Cardiac septum (tissue), 1 donor: ENCODE measurements at regions of chr9 and their contacts with region 1.

Region 1: GRCh38 chr9:2727966-2728613 is 10.8 kb downstream of the KCNV2 start:
- DNase-seq: no peak

Region 2: DNA sequence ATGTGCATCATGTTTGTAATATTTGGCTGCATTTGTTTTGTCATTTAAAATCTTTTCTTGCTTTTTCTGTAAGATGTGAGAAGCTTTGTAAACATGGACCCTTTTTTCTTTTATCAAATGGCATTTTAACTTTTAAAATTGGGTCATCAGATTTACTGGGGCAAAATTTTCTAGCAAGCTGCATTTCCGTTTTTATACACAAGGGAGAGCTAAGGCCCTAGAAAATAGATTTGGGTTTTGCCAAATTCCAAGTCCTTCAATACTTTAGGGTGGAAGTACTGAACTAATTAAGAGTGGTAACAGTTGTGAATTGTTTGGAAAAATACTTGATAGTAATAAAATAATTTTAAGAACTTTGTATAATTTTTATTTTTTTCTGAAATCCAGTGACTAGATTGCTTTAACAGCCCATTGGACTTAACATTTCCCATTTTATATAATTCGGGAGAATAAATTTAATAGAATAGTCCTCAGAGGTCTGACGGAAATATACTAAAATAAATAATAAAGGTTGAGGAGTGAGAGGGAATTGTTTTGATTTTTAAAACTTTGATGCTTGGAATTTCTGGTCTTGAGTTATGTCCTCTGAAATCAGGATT is 595.5 kb before region 1 on chr9:
- intact Hi-C with region 1: loop called (anchors 10 kb)
- DNase-seq: no peak

Region 3: GRCh38 chr9:2321523-2322151 is 406.5 kb before region 1 on chr9:
- intact Hi-C with region 1: loop called (anchors 10 kb)
- DNase-seq: no peak

Region 4: DNA sequence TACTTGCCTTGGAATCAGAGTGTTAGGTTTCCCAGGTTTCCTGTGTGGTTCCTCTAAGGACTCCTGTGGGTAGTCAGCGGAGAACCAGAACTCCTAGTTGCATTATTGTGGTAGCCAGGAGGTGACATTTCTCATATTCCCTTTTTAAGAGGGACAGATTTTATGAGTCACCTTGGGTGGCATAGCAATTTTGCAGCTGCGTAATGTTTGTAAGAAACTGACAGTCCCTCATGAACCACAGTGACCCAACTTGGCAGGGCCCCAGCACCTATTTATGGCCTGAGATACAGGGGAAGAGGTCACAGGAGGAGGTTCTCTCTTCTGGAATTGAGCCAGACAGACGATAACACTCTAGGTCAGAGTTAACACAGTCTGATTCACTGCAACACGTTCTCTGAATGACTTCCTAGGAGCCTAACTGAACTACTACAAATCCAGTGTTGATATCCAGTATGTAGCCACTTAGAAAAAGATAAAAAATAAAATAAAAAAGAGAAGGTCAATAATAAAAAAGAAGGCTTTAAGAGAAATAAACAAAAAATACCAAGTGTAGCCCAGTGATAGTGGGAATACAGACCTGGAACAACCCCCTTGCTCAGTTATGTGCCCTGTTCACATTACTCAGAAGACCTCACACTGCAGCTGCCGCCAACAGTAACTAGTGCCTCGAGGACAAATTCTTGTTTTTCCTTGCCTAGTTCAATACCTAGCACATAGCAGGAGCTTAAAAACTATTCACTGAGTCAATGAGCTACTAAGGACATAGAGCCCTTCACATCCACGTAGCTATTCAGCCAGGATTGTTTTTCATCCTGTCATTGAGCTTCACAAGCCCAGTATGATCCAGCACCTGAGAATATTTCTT is 157.2 kb before region 1 on chr9:
- intact Hi-C with region 1: loop called (anchors 10 kb)
- DNase-seq: peak; percentile 93

Region 5: DNA sequence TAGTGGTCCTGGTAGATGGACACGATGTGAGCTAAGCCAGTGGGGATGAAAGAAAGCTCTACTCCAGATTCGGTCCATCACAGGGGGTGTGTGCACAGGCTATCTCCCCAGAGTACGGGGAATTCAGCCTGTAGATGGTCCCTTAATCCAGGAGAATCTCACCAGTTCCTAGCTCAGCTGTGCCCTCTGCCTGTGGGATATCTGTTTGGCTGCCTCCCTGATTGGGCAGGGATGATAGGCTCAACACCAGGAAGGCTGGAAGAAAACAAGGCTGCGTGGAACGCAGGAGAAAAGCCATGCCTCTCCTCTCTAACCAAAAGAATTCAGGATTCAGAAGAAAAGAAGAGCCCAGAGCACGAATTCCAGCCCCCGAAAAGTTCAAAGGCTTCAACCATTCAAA is 65.6 kb before region 1 on chr9:
- intact Hi-C with region 1: loop called (anchors 5 kb)
- DNase-seq: no peak